ENCODE measurements at regions of chr5 and their contacts with region 1.

Region 1: GRCh38 chr5:172188033-172188892 is at the start of gene STK10:
- DNase-seq: peak; percentile 61 to 83
- H3K4me3 ChIP-seq: peak within 1 kb of the TSS; percentile 75 to 90 (median 81)
- H3K27ac ChIP-seq: peak within 1 kb of the TSS; percentile 77 to 79
- H3K4me1 ChIP-seq: peaks cover 0 to 3% of the 10 kb centered on the region in 2 donors
- H3K27me3 ChIP-seq: no peaks in the 10 kb centered on the region
- CTCF ChIP-seq: peak; percentile 56 to 87 (median 84)
- POLR2A ChIP-seq: no peak
- total RNA-seq, gene STK10: 17.1 to 32.5 (median 23.3) TPM

Region 2: GRCh38 chr5:172106511-172107356 is 81.5 kb before region 1 on chr5:
- intact Hi-C with region 1: loop called (anchors 10 kb)
- DNase-seq: peak in 1 of 2 donors; percentile 69
- H3K4me3 ChIP-seq: peak overlapping the region in 2 of 3 donors; percentile 43 to 60
- H3K27ac ChIP-seq: no peak overlapping the region
- H3K4me1 ChIP-seq: peaks cover 3 to 7% of the 10 kb centered on the region in 2 donors
- H3K27me3 ChIP-seq: no peaks in the 10 kb centered on the region
- CTCF ChIP-seq: peak; percentile 71 to 86 (median 81)
- POLR2A ChIP-seq: no peak

Region 3: DNA sequence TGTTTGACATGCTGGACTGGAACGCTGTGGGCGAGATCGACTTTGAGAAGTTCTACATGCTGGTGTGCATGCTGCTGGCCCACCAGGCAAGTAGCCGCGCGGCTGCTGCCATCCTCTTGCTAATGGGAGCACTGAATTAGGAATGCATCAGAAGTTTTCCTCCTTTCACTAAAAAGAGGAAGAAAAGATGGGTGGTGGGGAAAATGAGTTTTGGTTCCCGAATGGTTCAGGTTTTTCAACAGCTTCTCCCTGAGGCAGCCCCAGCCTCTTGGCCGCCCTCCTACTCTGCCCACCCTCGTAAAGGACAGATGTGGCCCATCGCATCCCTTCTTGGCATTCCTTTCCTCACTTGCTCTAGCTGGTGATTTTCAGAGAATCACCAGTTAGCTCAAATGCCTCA is 11.2 kb after region 1 on chr5:
- intact Hi-C with region 1: no loop called
- DNase-seq: no peak
- H3K4me3 ChIP-seq: no peak overlapping the region
- H3K27ac ChIP-seq: no peak overlapping the region
- H3K4me1 ChIP-seq: no peaks in the 10 kb centered on the region
- H3K27me3 ChIP-seq: no peaks in the 10 kb centered on the region
- CTCF ChIP-seq: no peak
- POLR2A ChIP-seq: no peak

Region 4: GRCh38 chr5:172235132-172235780 is 47.0 kb after region 1 on chr5:
- intact Hi-C with region 1: loop called (anchors 2 kb)
- DNase-seq: no peak
- H3K4me3 ChIP-seq: no peak overlapping the region
- H3K27ac ChIP-seq: peak overlapping the region; percentile 57 to 70
- H3K4me1 ChIP-seq: peaks cover 0 to 16% of the 10 kb centered on the region in 2 donors
- H3K27me3 ChIP-seq: no peaks in the 10 kb centered on the region
- CTCF ChIP-seq: no peak
- POLR2A ChIP-seq: no peak